ENCODE measurements at regions of chr20 and their contacts with region 1.

Region 1: GRCh38 chr20:35741892-35742740 is at the start of gene RBM39:
- DNase-seq: peak; percentile 100
- ATAC-seq: peak; percentile 90
- H3K4me3 ChIP-seq: peak within 1 kb of the TSS; percentile 90 to 92 (median 91)
- H3K27ac ChIP-seq: peak within 1 kb of the TSS; percentile 96
- H3K4me1 ChIP-seq: peaks cover 50% of the 10 kb centered on the region
- H3K27me3 ChIP-seq: no peaks in the 10 kb centered on the region; a peak in 1 of 5 replicates
- CTCF ChIP-seq: peak; percentile 70
- EP300 ChIP-seq: peak; percentile 83 to 87
- POLR2A ChIP-seq: peak; percentile 89 to 97
- RAD21 ChIP-seq: peak; percentile 66
- total RNA-seq, gene RBM39: 431 and 788 TPM in 2 replicates

Region 2: GRCh38 chr20:35463455-35464300 is 278.4 kb before region 1 on chr20:
- CTCF ChIA-PET with region 1: no interaction called
- POLR2A ChIA-PET with region 1: interaction called, 32 read pairs
- in situ Hi-C with region 1: no loop called
- intact Hi-C with region 1: no loop called
- DNase-seq: peak; percentile 84
- ATAC-seq: peak; percentile 79
- H3K4me3 ChIP-seq: no peak overlapping the region
- H3K27ac ChIP-seq: peak overlapping the region; percentile 14
- H3K4me1 ChIP-seq: peaks cover 42% of the 10 kb centered on the region
- H3K27me3 ChIP-seq: no peaks in the 10 kb centered on the region
- CTCF ChIP-seq: peak; percentile 95
- EP300 ChIP-seq: no peak
- POLR2A ChIP-seq: no peak
- RAD21 ChIP-seq: peak; percentile 92

Region 3: GRCh38 chr20:35619196-35620095 is 122.7 kb before region 1 on chr20:
- CTCF ChIA-PET with region 1: no interaction called
- POLR2A ChIA-PET with region 1: interaction called, 152 read pairs
- in situ Hi-C with region 1: no loop called
- intact Hi-C with region 1: loop called (anchors 5 kb)
- DNase-seq: peak; percentile 94
- ATAC-seq: peak; percentile 69
- H3K4me3 ChIP-seq: peak overlapping the region; percentile 59 to 96 (median 67)
- H3K27ac ChIP-seq: peak overlapping the region; percentile 0
- H3K4me1 ChIP-seq: peaks cover 26% of the 10 kb centered on the region
- H3K27me3 ChIP-seq: peaks cover 0 to 7% of the 10 kb centered on the region in 2 experiments; a peak in 1 of 5 replicates
- CTCF ChIP-seq: peak; percentile 93
- EP300 ChIP-seq: peak in 1 of 2 experiments; percentile 32; a peak in 1 of 4 replicates
- POLR2A ChIP-seq: peak in 1 of 2 experiments; percentile 74; a peak in 2 of 4 replicates
- RAD21 ChIP-seq: peak; percentile 78

Region 4: DNA sequence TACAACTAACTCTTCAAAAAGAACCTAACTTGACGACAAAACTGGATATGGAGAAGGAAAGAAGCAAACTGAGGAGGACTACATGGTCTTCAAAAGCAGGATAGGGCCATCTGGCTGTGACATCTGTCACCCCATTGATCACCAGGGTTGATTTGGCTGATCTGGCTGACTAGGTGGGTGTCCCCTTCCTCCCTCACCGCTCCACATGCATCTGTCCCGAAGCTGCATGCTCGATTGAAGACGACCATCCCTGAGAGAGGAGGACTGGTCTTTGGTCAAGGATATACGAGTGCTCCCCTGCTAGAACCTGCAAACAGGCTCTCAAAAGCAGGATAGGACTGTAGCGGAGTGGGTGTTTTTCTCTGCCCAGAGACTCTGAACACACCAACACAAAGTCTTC is 99.1 kb before region 1 on chr20:
- CTCF ChIA-PET with region 1: no interaction called
- POLR2A ChIA-PET with region 1: no interaction called
- in situ Hi-C with region 1: no loop called
- intact Hi-C with region 1: no loop called
- DNase-seq: no peak
- ATAC-seq: no peak
- H3K4me3 ChIP-seq: no peak overlapping the region
- H3K27ac ChIP-seq: no peak overlapping the region
- H3K4me1 ChIP-seq: peaks cover 4% of the 10 kb centered on the region
- H3K27me3 ChIP-seq: no peaks in the 10 kb centered on the region
- CTCF ChIP-seq: no peak
- EP300 ChIP-seq: no peak
- POLR2A ChIP-seq: no peak; a peak in 1 of 4 replicates
- RAD21 ChIP-seq: no peak

Region 5: GRCh38 chr20:35711588-35712209 is 30.4 kb before region 1 on chr20:
- CTCF ChIA-PET with region 1: no interaction called
- POLR2A ChIA-PET with region 1: interaction called, 38 read pairs
- in situ Hi-C with region 1: no loop called
- intact Hi-C with region 1: no loop called
- DNase-seq: no peak
- ATAC-seq: no peak
- H3K4me3 ChIP-seq: no peak overlapping the region
- H3K27ac ChIP-seq: no peak overlapping the region
- H3K4me1 ChIP-seq: no peaks in the 10 kb centered on the region; the same call in 1 of the 2 replicates
- H3K27me3 ChIP-seq: no peaks in the 10 kb centered on the region
- CTCF ChIP-seq: no peak
- EP300 ChIP-seq: no peak
- POLR2A ChIP-seq: no peak; a peak in 1 of 4 replicates
- RAD21 ChIP-seq: 0 out of 2 replicates have a peak, but pooled peaks have one; percentile 7

Region 6: GRCh38 chr20:35757098-35757705 is 15.1 kb after region 1 on chr20:
- CTCF ChIA-PET with region 1: no interaction called
- POLR2A ChIA-PET with region 1: interaction called, 461 read pairs
- in situ Hi-C with region 1: no loop called
- intact Hi-C with region 1: no loop called
- DNase-seq: no peak
- ATAC-seq: peak; percentile 14; the same call in 2 of the 3 replicates
- H3K4me3 ChIP-seq: no peak overlapping the region
- H3K27ac ChIP-seq: no peak overlapping the region
- H3K4me1 ChIP-seq: peaks cover 24% of the 10 kb centered on the region
- H3K27me3 ChIP-seq: peaks cover 0 to 9% of the 10 kb centered on the region in 2 experiments; a peak in 1 of 5 replicates
- CTCF ChIP-seq: no peak
- EP300 ChIP-seq: no peak
- POLR2A ChIP-seq: no peak
- RAD21 ChIP-seq: no peak

Region 7: DNA sequence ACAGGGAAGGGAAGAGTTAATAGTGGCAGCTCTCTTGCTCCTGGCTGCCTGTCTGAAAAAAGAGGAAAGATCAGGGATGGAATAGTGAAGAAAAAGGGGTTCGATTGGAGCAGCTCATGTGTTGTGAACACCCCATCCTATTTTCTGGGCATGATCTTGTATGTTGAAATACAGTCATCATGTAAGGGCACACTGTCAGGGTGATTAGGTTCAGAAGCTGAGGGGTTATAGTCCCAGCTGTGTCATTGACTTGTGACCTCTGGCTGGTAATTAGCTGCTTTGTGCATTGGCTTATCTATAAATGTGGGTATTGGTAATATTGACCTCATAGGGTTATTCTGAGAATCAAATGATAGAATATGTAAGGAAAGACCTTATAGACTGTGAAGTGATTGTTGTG is 59.7 kb after region 1 on chr20:
- CTCF ChIA-PET with region 1: no interaction called
- POLR2A ChIA-PET with region 1: interaction called, 12 read pairs
- in situ Hi-C with region 1: no loop called
- intact Hi-C with region 1: no loop called
- DNase-seq: no peak
- ATAC-seq: no peak
- H3K4me3 ChIP-seq: no peak overlapping the region
- H3K27ac ChIP-seq: no peak overlapping the region
- H3K4me1 ChIP-seq: no peaks in the 10 kb centered on the region
- H3K27me3 ChIP-seq: no peaks in the 10 kb centered on the region
- CTCF ChIP-seq: no peak
- EP300 ChIP-seq: no peak
- POLR2A ChIP-seq: no peak
- RAD21 ChIP-seq: no peak

Region 8: DNA sequence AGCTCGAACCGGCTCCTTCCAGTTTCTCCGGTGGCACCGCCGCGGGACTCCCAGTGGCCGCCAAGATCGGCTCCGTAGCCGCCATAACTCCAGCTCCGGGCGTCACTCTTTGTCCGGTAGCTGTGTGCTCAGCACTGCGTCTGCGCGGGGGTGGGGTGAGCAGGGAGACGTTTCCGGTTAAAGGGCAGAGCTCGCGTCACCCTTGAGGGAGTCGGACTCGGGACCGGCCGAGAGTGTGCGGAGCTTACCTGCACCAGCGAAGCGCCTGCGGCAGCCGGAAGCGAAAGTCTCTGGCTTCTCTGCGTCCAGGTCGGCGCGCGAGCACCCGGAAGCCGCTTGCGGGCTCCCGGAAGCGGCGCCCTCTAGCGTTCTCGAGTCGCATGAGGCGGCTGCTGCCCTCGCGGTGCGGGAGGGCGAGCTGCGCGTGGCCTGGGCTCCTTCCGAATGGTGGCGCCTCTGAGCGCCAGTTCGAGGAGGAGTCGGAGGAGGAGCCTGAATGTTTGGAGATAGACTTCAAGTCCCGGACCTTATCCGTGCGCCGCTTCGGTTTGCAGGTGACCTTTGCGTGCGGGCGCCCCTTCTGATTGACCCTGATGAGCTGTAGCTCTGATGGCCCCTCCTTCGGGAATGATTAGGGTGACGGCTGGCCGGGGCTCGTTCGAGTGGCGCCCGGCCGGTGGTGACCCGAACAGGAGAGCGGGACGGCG is 212.2 kb after region 1 on chr20 and contains the start of gene SCAND1:
- CTCF ChIA-PET with region 1: no interaction called
- POLR2A ChIA-PET with region 1: interaction called, 72 read pairs
- in situ Hi-C with region 1: no loop called
- intact Hi-C with region 1: no loop called
- DNase-seq: peak; percentile 99
- ATAC-seq: peak; percentile 92
- H3K4me3 ChIP-seq: peak within 1 kb of the TSS; percentile 86 to 99 (median 97)
- H3K27ac ChIP-seq: peak within 1 kb of the TSS; percentile 97
- H3K4me1 ChIP-seq: peaks cover 23% of the 10 kb centered on the region
- H3K27me3 ChIP-seq: no peaks in the 10 kb centered on the region; a peak in 1 of 5 replicates
- CTCF ChIP-seq: peak; percentile 100
- EP300 ChIP-seq: peak; percentile 73 to 82
- POLR2A ChIP-seq: peak; percentile 97
- RAD21 ChIP-seq: peak; percentile 93
- total RNA-seq, gene SCAND1: 86.3 and 109 TPM in 2 replicates

Measured in HepG2 (cell line).